Calu3 (cell line): ENCODE measurements at regions of chr13 and their contacts with region 1.

Region 1: GRCh38 chr13:91162180-91162579 is 185.3 kb upstream of the MIR17HG start:
- DNase-seq: no peak
- H3K4me3 Mint-ChIP-seq: no peak overlapping the region
- H3K27ac Mint-ChIP-seq: no peak overlapping the region
- H3K4me1 Mint-ChIP-seq: no peaks in the 10 kb centered on the region
- H3K27me3 Mint-ChIP-seq: no peaks in the 10 kb centered on the region
- CTCF ChIP-seq: no peak

Region 2: GRCh38 chr13:91247768-91248167 is 85.6 kb after region 1 on chr13:
- CTCF ChIA-PET with region 1: interaction called, 8 read pairs
- intact Hi-C with region 1: loop called (anchors 2 kb)
- DNase-seq: no peak
- H3K4me3 Mint-ChIP-seq: no peak overlapping the region
- H3K27ac Mint-ChIP-seq: no peak overlapping the region
- H3K4me1 Mint-ChIP-seq: no peaks in the 10 kb centered on the region
- H3K27me3 Mint-ChIP-seq: no peaks in the 10 kb centered on the region
- CTCF ChIP-seq: no peak

Region 3: GRCh38 chr13:91785431-91786119 is 623.4 kb after region 1 on chr13:
- CTCF ChIA-PET with region 1: no interaction called
- intact Hi-C with region 1: no loop called
- DNase-seq: no peak
- H3K4me3 Mint-ChIP-seq: no peak overlapping the region
- H3K27ac Mint-ChIP-seq: no peak overlapping the region
- H3K4me1 Mint-ChIP-seq: no peaks in the 10 kb centered on the region
- H3K27me3 Mint-ChIP-seq: no peaks in the 10 kb centered on the region
- CTCF ChIP-seq: no peak